ENCODE measurements at regions of chr11 and their contacts with region 1.

Region 1: GRCh38 chr11:118198370-118198769 is 21.9 kb upstream of the SCN2B start:
- DNase-seq: peak; percentile 78
- ATAC-seq: peak; percentile 47
- H3K4me3 ChIP-seq: peak overlapping the region; percentile 23; the same call in 1 of the 2 replicates
- H3K27ac ChIP-seq: no peak overlapping the region
- H3K4me1 ChIP-seq: peaks cover 19% of the 10 kb centered on the region
- H3K27me3 ChIP-seq: no peaks in the 10 kb centered on the region
- CTCF ChIP-seq: peak; percentile 99

Region 2: GRCh38 chr11:118247047-118247446 is 48.7 kb after region 1 on chr11:
- CTCF ChIA-PET with region 1: interaction called, 10 read pairs
- POLR2A ChIA-PET with region 1: no interaction called
- intact Hi-C with region 1: loop called (anchors 2 kb)
- DNase-seq: peak; percentile 91
- ATAC-seq: peak; percentile 94
- H3K4me3 ChIP-seq: no peak overlapping the region
- H3K27ac ChIP-seq: peak overlapping the region; percentile 82
- H3K4me1 ChIP-seq: peaks cover 41% of the 10 kb centered on the region
- H3K27me3 ChIP-seq: no peaks in the 10 kb centered on the region
- CTCF ChIP-seq: peak; percentile 13; the same call in 1 of the 2 replicates

Region 3: GRCh38 chr11:118290923-118291322 is 92.6 kb after region 1 on chr11:
- CTCF ChIA-PET with region 1: interaction called, 33 read pairs
- POLR2A ChIA-PET with region 1: no interaction called
- intact Hi-C with region 1: loop called (anchors 1 kb)
- DNase-seq: peak; percentile 86
- ATAC-seq: peak; percentile 69
- H3K4me3 ChIP-seq: peak overlapping the region; percentile 42; the same call in 1 of the 2 replicates
- H3K27ac ChIP-seq: no peak overlapping the region
- H3K4me1 ChIP-seq: peaks cover 34% of the 10 kb centered on the region
- H3K27me3 ChIP-seq: no peaks in the 10 kb centered on the region
- CTCF ChIP-seq: peak; percentile 92

Region 4: DNA sequence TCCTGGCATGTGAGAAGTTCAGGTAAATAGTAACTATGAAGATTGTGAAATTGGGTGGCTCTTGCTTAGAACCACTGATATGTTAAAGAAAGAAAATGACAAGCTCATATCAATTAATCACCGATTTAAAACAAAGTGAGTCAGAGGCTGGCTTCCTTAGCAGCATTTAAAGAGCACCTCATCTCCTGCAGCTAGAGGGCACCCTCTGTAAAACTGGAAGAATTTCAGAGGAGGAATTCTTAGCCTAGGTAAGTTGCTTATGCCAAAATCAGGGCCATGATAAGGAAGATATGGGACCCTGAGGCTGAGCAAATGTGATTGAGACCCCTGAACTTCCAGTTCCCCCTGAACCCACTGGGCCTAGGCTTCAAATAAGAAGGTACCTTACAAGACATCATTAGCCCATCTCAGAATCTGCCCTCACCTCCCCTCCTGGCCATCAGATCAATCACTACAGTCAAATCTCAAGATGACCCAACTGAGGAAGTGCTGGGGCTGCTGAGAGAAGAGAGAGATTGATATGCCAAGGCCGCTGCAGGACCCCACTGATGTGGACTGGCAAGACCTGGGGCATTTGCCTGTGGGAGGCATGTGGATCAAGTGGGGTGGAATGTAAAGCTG is 97.6 kb after region 1 on chr11:
- CTCF ChIA-PET with region 1: interaction called, 33 read pairs
- POLR2A ChIA-PET with region 1: no interaction called
- intact Hi-C with region 1: loop called (anchors 1 kb)
- DNase-seq: peak; percentile 89
- ATAC-seq: peak; percentile 68
- H3K4me3 ChIP-seq: no peak overlapping the region
- H3K27ac ChIP-seq: no peak overlapping the region
- H3K4me1 ChIP-seq: peaks cover 17% of the 10 kb centered on the region
- H3K27me3 ChIP-seq: peaks cover 6% of the 10 kb centered on the region
- CTCF ChIP-seq: peak; percentile 95

Region 5: DNA sequence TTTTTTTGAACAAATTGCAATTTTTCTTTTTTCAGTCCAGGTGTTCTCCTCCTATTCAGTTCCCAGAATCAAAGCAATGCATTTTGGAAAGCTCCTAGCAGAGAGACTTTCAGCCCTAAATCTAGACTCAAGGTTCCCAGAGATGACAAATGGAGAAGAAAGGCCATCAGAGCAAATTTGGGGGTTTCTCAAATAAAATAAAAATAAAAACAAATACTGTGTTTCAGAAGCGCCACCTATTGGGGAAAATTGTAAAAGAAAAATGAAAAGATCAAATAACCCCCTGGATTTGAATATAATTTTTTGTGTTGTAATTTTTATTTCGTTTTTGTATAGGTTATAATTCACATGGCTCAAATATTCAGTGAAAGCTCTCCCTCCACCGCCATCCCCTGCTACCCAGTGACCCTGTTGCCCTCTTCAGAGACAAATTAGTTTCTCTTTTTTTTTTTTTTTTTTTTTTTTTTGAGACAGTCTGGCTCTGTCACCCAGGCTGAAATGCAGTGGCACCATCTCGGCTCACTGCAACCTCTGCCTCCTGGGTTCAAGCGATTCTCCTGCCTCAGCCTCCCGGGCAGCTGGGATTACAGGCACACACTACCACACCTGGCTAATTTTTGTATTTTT is 154.8 kb after region 1 on chr11:
- CTCF ChIA-PET with region 1: interaction called, 3 read pairs
- POLR2A ChIA-PET with region 1: no interaction called
- intact Hi-C with region 1: loop called (anchors 2 kb)
- DNase-seq: peak; percentile 67
- ATAC-seq: no peak
- H3K4me3 ChIP-seq: no peak overlapping the region
- H3K27ac ChIP-seq: no peak overlapping the region
- H3K4me1 ChIP-seq: no peaks in the 10 kb centered on the region
- H3K27me3 ChIP-seq: peaks cover 24% of the 10 kb centered on the region; the same call in 1 of the 2 replicates
- CTCF ChIP-seq: peak; percentile 86